MCF 10A (cell line): ENCODE measurements at regions of chr7 and their contacts with region 1.

Region 1: GRCh38 chr7:98056580-98056979 is 50.1 kb upstream of the LMTK2 start:
- DNase-seq: peak; percentile 79
- H3K4me3 Mint-ChIP-seq: peak overlapping the region; percentile 53
- H3K27ac Mint-ChIP-seq: peak overlapping the region; percentile 87
- H3K4me1 Mint-ChIP-seq: peaks cover 36% of the 10 kb centered on the region
- H3K27me3 Mint-ChIP-seq: no peaks in the 10 kb centered on the region
- CTCF ChIP-seq: no peak

Region 2: DNA sequence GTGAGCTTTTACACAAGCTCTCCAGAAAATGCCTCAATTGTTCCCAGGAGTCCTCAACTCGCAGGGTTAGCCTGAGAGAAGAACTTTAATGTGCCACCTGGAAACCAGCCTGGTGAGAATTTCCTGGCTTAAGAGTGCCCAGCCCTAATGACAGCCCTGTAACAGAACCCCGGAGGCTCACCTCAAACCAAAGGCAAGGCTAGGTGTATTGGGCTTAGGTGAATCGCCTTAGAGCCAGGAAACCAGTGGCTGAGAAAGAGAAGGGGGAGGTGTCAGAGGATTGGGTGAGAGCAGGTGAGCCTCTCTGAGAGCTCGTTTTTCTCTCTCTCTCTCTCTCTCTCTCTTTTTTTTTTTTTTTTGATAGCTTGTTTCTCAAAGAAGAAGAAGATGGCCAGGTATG is 73.9 kb before region 1 on chr7:
- CTCF ChIA-PET with region 1: no interaction called
- POLR2A ChIA-PET with region 1: no interaction called
- intact Hi-C with region 1: no loop called
- DNase-seq: no peak
- H3K4me3 Mint-ChIP-seq: no peak overlapping the region
- H3K27ac Mint-ChIP-seq: no peak overlapping the region
- H3K4me1 Mint-ChIP-seq: no peaks in the 10 kb centered on the region
- H3K27me3 Mint-ChIP-seq: no peaks in the 10 kb centered on the region
- CTCF ChIP-seq: no peak

Region 3: GRCh38 chr7:98086281-98086718 is 29.7 kb after region 1 on chr7:
- CTCF ChIA-PET with region 1: interaction called, 5 read pairs
- POLR2A ChIA-PET with region 1: interaction called, 13 read pairs
- intact Hi-C with region 1: no loop called
- DNase-seq: peak; percentile 79
- H3K4me3 Mint-ChIP-seq: no peak overlapping the region
- H3K27ac Mint-ChIP-seq: peak overlapping the region; percentile 91
- H3K4me1 Mint-ChIP-seq: peaks cover 8% of the 10 kb centered on the region
- H3K27me3 Mint-ChIP-seq: no peaks in the 10 kb centered on the region
- CTCF ChIP-seq: no peak

Region 4: GRCh38 chr7:98240961-98241674 is 184.5 kb after region 1 on chr7:
- CTCF ChIA-PET with region 1: no interaction called
- POLR2A ChIA-PET with region 1: no interaction called
- intact Hi-C with region 1: no loop called
- DNase-seq: peak; percentile 49
- H3K4me3 Mint-ChIP-seq: no peak overlapping the region
- H3K27ac Mint-ChIP-seq: no peak overlapping the region
- H3K4me1 Mint-ChIP-seq: no peaks in the 10 kb centered on the region
- H3K27me3 Mint-ChIP-seq: no peaks in the 10 kb centered on the region
- CTCF ChIP-seq: peak; percentile 50